ENCODE measurements at regions of chr5 and their contacts with region 1.

Region 1: GRCh38 chr5:66285343-66285922 is 141.3 kb downstream of the SREK1 start:
- DNase-seq: no peak

Region 2: DNA sequence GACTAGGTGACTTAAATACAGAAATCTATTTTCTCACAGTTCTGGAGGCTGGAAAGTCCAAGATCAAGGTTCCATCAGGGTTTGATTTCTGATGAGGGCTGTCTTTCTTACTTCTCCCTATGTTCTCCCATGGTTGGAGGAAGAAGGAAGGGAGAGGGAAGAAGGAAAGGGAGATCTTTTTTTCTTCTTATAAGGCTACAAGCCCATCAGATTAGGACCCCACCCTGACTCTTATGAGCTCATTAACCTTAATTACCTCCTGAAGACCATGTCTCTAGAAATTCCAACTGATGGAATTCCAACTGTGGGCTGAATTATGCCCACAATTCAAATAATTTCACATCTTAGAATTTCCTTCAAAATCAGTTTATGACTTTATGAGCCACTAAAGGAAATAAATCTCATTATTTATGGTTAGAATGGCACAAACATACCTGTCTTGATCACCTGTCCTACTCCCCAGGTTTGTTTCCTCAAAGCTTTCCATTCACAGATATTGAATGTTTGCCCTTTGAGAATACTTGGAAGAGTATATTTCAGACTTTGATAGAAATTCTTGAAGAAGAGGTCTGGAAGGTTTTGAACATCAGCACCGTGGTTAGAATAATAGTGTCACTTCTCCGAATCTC is 714.7 kb before region 1 on chr5:
- intact Hi-C with region 1: loop called in 1 of 2 experiments (anchors 5 kb)
- DNase-seq: no peak

Measured in posterior vena cava (tissue), 2 donors.